Activated B cell treated with CpG ODN at 0.5 μM for 24 hours (primary cell): ENCODE measurements at regions of chr13 and their contacts with region 1.

Region 1: DNA sequence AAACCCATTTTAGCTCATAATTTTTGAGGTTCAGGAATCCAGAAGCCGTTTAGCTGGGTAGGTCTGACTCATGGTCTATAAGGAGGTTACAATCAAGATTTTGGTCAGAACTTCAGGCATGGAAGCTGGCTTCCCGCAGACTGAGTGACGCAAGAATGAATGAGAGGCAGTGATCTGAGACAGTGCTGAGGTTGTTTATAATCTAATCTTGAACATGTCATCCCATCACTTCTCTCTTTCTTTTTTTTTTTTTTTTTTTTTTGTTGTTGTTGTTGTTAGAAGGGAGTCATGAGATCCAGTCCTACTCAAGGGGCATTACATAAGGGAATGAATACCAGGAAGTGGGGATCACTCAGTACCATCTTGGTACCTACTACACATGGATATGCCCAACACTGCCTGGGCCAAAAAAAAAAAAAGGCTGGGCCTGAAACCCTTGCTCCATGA is 217.4 kb downstream of the DLEU7 start:
- DNase-seq: no peak
- ATAC-seq: peak; percentile 31
- H3K4me3 Mint-ChIP-seq: no peak overlapping the region
- H3K27ac Mint-ChIP-seq: no peak overlapping the region
- H3K4me1 Mint-ChIP-seq: peaks cover 18% of the 10 kb centered on the region
- H3K27me3 Mint-ChIP-seq: no peaks in the 10 kb centered on the region
- CTCF ChIP-seq: no peak

Region 2: DNA sequence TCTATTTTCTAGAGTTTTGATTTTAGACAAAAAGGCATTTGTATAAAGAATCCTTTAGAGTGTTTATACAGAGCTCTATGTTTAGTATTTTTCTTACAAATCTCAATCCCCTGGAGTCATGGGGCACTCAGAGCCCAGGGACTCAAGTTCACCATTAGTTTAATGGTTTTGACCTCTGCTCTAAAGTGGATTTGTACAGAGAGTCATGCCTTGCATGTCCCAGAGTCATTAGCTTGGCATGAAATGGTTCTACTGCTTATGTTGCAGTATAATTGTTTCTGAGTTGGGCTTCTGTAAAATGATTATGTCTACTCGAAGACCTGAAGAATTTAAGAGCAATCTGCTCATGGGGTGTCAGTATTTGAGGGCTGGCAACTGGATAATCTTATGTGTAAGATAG is 188.9 kb before region 1 on chr13:
- CTCF ChIA-PET with region 1: no interaction called
- POLR2A ChIA-PET with region 1: interaction called, 10 read pairs
- intact Hi-C with region 1: no loop called
- DNase-seq: no peak
- ATAC-seq: no peak
- H3K4me3 Mint-ChIP-seq: no peak overlapping the region
- H3K27ac Mint-ChIP-seq: no peak overlapping the region
- H3K4me1 Mint-ChIP-seq: no peaks in the 10 kb centered on the region
- H3K27me3 Mint-ChIP-seq: no peaks in the 10 kb centered on the region
- CTCF ChIP-seq: no peak

Region 3: GRCh38 chr13:50576156-50576555 is 50.0 kb before region 1 on chr13:
- CTCF ChIA-PET with region 1: no interaction called
- POLR2A ChIA-PET with region 1: no interaction called
- intact Hi-C with region 1: no loop called
- DNase-seq: no peak
- ATAC-seq: no peak
- H3K4me3 Mint-ChIP-seq: no peak overlapping the region
- H3K27ac Mint-ChIP-seq: no peak overlapping the region
- H3K4me1 Mint-ChIP-seq: peaks cover 17% of the 10 kb centered on the region
- H3K27me3 Mint-ChIP-seq: no peaks in the 10 kb centered on the region
- CTCF ChIP-seq: no peak

Region 4: DNA sequence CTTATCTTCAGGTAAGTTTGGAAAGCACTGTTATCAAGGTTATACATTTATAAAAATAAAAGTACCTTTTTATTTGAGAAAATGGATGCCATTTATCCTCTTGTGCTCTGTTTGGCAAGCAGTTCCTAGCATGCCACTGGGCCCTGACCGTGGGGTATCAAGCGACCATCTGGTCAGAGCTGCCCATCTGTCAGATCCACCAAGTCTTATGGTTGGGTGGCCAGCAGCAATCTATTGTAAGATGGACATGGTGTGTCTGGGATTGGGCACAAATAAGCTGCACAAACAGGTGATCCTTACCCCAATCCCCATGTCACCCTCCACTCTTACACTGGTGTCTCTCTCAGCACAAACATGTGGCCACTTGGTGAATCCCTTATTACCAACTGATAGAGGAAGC is 38.8 kb after region 1 on chr13:
- CTCF ChIA-PET with region 1: no interaction called
- POLR2A ChIA-PET with region 1: interaction called, 10 read pairs
- intact Hi-C with region 1: no loop called
- DNase-seq: no peak
- ATAC-seq: no peak
- H3K4me3 Mint-ChIP-seq: no peak overlapping the region
- H3K27ac Mint-ChIP-seq: no peak overlapping the region
- H3K4me1 Mint-ChIP-seq: peaks cover 5% of the 10 kb centered on the region
- H3K27me3 Mint-ChIP-seq: no peaks in the 10 kb centered on the region
- CTCF ChIP-seq: no peak

Region 5: DNA sequence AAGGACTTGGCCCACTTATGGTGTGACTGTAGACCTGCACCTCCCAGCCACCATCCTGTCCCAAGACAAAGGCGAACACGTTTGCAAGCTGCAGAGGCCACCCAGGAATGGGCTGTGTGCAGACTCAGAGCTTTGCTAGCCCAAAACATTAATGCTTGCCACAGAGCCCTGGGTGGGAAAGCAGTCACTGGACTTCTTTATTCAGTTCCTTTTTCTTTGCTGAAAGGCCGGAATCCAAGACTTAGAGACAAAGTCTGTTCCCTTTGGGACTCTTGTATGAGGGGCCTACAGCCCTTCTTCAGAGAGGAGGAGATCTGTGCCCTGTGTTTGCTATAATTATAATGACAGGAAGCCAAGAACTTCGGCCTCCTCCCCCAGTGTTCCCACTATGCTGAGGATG is 49.5 kb after region 1 on chr13:
- CTCF ChIA-PET with region 1: no interaction called
- POLR2A ChIA-PET with region 1: no interaction called
- intact Hi-C with region 1: no loop called
- DNase-seq: no peak
- ATAC-seq: no peak
- H3K4me3 Mint-ChIP-seq: no peak overlapping the region
- H3K27ac Mint-ChIP-seq: no peak overlapping the region
- H3K4me1 Mint-ChIP-seq: peaks cover 18% of the 10 kb centered on the region
- H3K27me3 Mint-ChIP-seq: no peaks in the 10 kb centered on the region
- CTCF ChIP-seq: no peak